ENCODE measurements at regions of chr19 and their contacts with region 1.

Region 1: DNA sequence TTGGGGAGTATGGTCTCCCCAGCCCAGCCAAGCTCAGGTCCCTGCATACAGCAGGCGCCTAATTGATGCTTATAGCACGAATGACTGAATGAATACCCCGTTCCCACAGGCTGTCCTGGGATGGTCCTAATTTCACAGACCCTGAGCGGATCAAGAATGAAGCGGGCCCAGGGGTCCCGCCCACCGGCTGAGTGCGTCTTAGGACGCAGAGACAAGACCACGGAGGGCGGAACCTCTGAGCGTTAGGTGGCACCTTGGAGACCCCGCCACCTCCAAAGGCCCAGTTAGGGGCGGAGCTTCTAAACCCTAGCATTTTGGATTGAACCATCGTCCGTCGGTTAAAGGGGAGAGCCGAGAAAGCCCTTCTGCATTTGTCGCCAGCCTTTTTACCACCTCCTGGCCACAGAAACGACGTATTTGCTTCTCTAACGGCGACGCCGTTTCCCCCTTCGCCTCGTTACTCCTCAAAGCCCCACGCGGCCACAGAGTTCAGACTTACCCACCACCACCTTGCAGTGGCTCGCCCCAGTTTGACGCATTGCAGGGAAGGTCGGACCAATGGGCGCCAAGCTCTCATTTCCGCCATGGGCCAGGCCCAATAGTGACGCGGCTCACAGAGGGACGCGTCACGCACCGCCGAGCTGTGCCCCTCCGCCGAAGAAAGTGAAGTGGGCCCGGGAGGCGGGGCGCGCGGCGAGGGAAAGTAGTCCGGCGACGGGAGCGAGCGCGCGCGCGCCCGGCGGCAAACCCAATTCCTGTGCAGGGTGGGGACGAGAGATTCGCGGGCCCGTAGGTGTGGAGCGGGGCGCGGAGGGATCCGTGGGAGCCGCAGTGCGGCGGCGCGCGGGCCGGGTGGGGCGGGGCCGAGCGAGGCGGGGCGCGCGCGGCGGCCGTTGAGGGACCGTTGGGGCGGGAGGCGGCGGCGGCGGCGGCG is 479 bp upstream of the CALM3 start:
- DNase-seq: peak; percentile 95 to 99 (median 97)
- ATAC-seq: peak; percentile 89
- H3K4me3 ChIP-seq: peak overlapping the region; percentile 88 to 99
- H3K4me3 Mint-ChIP-seq: peak overlapping the region; percentile 96
- H3K27ac ChIP-seq: peak overlapping the region; percentile 100
- H3K27ac Mint-ChIP-seq: peak overlapping the region; percentile 100
- H3K4me1 ChIP-seq: peaks cover 34% of the 10 kb centered on the region
- H3K4me1 Mint-ChIP-seq: peaks cover 38% of the 10 kb centered on the region
- H3K27me3 ChIP-seq: no peaks in the 10 kb centered on the region
- H3K27me3 Mint-ChIP-seq: no peaks in the 10 kb centered on the region
- CTCF ChIP-seq: no peak

Region 2: GRCh38 chr19:46634045-46634655 is 33.5 kb after region 1 on chr19:
- CTCF ChIA-PET with region 1: interaction called, 4 read pairs
- POLR2A ChIA-PET with region 1: interaction called, 14 read pairs
- intact Hi-C with region 1: loop called (anchors 1 kb)
- DNase-seq: peak; percentile 86 to 96 (median 92)
- ATAC-seq: peak; percentile 83
- H3K4me3 ChIP-seq: peak overlapping the region; percentile 40 to 59
- H3K4me3 Mint-ChIP-seq: peak overlapping the region; percentile 80
- H3K27ac ChIP-seq: peak overlapping the region; percentile 35 to 48
- H3K27ac Mint-ChIP-seq: peak overlapping the region; percentile 90
- H3K4me1 ChIP-seq: peaks cover 36% of the 10 kb centered on the region
- H3K4me1 Mint-ChIP-seq: peaks cover 24% of the 10 kb centered on the region
- H3K27me3 ChIP-seq: peaks cover 0 to 24% of the 10 kb centered on the region in 2 experiments
- H3K27me3 Mint-ChIP-seq: no peaks in the 10 kb centered on the region
- CTCF ChIP-seq: no peak

Region 3: GRCh38 chr19:46717034-46717723 is 116.5 kb after region 1 on chr19 and contains the start of gene PRKD2:
- CTCF ChIA-PET with region 1: interaction called, 4 read pairs
- POLR2A ChIA-PET with region 1: interaction called, 5 read pairs
- intact Hi-C with region 1: loop called (anchors 1 kb)
- DNase-seq: peak; percentile 60 to 91 (median 86)
- ATAC-seq: peak; percentile 51
- H3K4me3 ChIP-seq: peak within 1 kb of the TSS; percentile 71 to 73
- H3K4me3 Mint-ChIP-seq: peak within 1 kb of the TSS; percentile 92
- H3K27ac ChIP-seq: peak within 1 kb of the TSS; percentile 77 to 94
- H3K27ac Mint-ChIP-seq: peak within 1 kb of the TSS; percentile 99
- H3K4me1 ChIP-seq: peaks cover 37% of the 10 kb centered on the region
- H3K4me1 Mint-ChIP-seq: peaks cover 45% of the 10 kb centered on the region
- H3K27me3 ChIP-seq: no peaks in the 10 kb centered on the region
- H3K27me3 Mint-ChIP-seq: no peaks in the 10 kb centered on the region
- CTCF ChIP-seq: no peak
- total RNA-seq, gene PRKD2: 81.1 to 89.7 TPM

Region 4: DNA sequence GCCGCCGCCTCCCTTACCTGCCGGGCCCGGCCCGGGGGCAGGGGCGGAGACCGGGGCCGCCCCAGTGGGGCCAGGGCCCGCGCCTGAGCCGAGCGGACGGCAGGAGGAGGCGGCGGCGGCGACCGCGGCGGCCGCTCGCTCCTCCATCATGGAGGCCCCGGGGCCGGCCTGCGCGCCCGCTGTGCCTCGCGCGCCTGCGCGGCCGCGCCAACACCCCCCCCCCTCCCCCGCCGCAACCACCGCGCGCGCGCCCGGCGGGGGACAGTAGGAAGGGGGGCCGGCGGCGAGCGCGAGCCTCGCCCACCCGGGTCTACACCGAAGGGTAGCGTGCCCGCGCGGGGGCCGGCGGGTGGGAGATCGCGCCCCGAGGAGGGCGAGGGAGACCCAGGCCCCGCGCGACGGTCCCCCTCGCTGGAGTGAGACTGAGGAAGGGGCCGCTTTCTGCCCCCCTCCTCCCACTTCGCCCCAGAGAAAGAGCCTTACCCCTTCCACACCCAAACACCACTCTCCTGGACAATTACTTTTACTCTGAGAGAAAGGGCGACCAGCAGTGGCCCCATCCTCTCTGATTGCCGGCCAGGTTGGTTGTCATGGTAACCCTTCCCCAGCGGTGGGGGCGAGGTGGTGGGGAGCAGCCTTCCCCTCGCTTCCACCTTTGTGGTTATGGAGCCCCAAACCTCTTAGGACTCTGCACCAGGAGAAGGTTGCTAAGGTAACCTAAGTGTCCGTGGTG is 145.8 kb after region 1 on chr19 and contains the start of gene STRN4:
- CTCF ChIA-PET with region 1: no interaction called
- POLR2A ChIA-PET with region 1: no interaction called
- intact Hi-C with region 1: loop called (anchors 1 to 2 kb)
- DNase-seq: peak in 8 of 9 experiments; percentile 50 to 85 (median 64)
- ATAC-seq: peak; percentile 74
- H3K4me3 ChIP-seq: peak within 1 kb of the TSS; percentile 79 to 90
- H3K4me3 Mint-ChIP-seq: peak within 1 kb of the TSS; percentile 89
- H3K27ac ChIP-seq: peak within 1 kb of the TSS; percentile 46 to 61
- H3K27ac Mint-ChIP-seq: peak within 1 kb of the TSS; percentile 88
- H3K4me1 ChIP-seq: peaks cover 33% of the 10 kb centered on the region
- H3K4me1 Mint-ChIP-seq: peaks cover 51% of the 10 kb centered on the region
- H3K27me3 ChIP-seq: no peaks in the 10 kb centered on the region
- H3K27me3 Mint-ChIP-seq: no peaks in the 10 kb centered on the region
- CTCF ChIP-seq: no peak
- total RNA-seq, gene STRN4: 120 to 126 TPM

Region 5: DNA sequence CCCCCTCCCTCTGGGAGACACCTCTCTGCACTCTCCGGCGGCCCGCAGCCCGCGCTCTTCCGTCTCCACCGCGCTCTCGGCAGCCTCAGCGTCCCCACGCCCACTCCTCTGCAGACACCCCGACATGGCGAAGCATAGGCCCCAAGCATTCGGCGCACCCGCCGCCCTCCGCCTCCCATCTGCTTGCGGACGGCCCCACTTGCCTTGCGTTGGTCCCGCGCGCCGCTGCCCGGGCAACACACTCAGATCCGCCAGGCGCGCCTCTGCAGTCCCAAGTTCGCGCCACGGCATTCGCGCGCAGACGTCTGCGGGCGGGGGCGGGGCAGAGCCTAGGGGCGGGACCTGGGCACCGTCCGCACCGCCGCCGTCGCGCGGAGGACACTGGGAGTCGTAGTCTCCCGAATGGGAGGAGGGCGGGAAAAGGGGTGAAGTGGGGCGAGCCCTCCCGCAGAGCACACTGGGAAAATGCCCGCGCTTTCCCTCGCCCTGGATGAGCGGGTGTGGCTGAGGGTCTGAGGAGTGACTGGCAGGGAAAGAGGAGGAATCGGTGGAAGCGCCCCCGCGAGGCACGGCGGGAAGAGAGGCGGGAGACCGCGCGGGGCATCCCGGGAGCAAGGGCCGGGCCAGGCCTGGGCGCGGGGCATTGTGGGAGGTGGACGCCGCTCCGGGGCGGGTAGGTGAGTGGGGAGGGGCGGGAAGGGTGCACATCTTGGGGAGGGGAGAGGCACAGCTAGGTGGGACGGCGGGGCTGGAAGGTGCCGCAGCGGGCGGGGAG is 1569.6 kb after region 1 on chr19 and contains the starts of genes LIG1 and ZSWIM9:
- CTCF ChIA-PET with region 1: no interaction called
- POLR2A ChIA-PET with region 1: no interaction called
- intact Hi-C with region 1: loop called in 1 of 2 experiments (anchors 5 kb)
- DNase-seq: peak; percentile 82 to 95 (median 90)
- ATAC-seq: peak; percentile 81
- H3K4me3 ChIP-seq: peak within 1 kb of the TSS; percentile 96 to 100
- H3K4me3 Mint-ChIP-seq: peak within 1 kb of the TSS; percentile 98
- H3K27ac ChIP-seq: peak within 1 kb of the TSS; percentile 82 to 92
- H3K27ac Mint-ChIP-seq: peak within 1 kb of the TSS; percentile 97
- H3K4me1 ChIP-seq: peaks cover 7% of the 10 kb centered on the region
- H3K4me1 Mint-ChIP-seq: peaks cover 22% of the 10 kb centered on the region
- H3K27me3 ChIP-seq: no peaks in the 10 kb centered on the region
- H3K27me3 Mint-ChIP-seq: no peaks in the 10 kb centered on the region
- CTCF ChIP-seq: peak; percentile 25
- total RNA-seq, gene LIG1: 62.5 to 67.5 TPM
- total RNA-seq, gene ZSWIM9: 2.5 to 4.5 TPM